Kidney (tissue), 22 donors: ENCODE measurements at regions of chr19 and their contacts with region 1.

Region 1: GRCh38 chr19:49224856-49225255 is 67.3 kb downstream of the TRPM4 start:
- DNase-seq: peak in 3 of 5 donors; percentile 42 to 76 (median 76)
- H3K4me3 ChIP-seq: no peak overlapping the region
- H3K27ac ChIP-seq: no peak overlapping the region
- H3K4me1 ChIP-seq: no peaks in the 10 kb centered on the region
- H3K27me3 ChIP-seq: no peaks in the 10 kb centered on the region
- CTCF ChIP-seq: peak; percentile 42

Region 2: GRCh38 chr19:49430678-49431329 is 205.9 kb after region 1 on chr19:
- intact Hi-C with region 1: loop called (anchors 10 kb)
- DNase-seq: no peak
- H3K4me3 ChIP-seq: no peak overlapping the region
- H3K27ac ChIP-seq: no peak overlapping the region
- H3K4me1 ChIP-seq: no peaks in the 10 kb centered on the region
- H3K27me3 ChIP-seq: peaks cover 60% of the 10 kb centered on the region
- CTCF ChIP-seq: no peak